ENCODE measurements at regions of chr1 and their contacts with region 1.

Region 1: GRCh38 chr1:156728597-156729462 is at the start of gene ISG20L2:
- DNase-seq: peak; percentile 90
- ATAC-seq: peak; percentile 88
- H3K4me3 ChIP-seq: peak within 1 kb of the TSS; percentile 89 to 100 (median 98)
- H3K27ac ChIP-seq: peak within 1 kb of the TSS; percentile 79
- H3K4me1 ChIP-seq: peaks cover 49% of the 10 kb centered on the region
- H3K27me3 ChIP-seq: no peaks in the 10 kb centered on the region; a peak in 1 of 5 replicates
- CTCF ChIP-seq: 0 out of 2 replicates have a peak, but pooled peaks have one; percentile 21
- EP300 ChIP-seq: no peak
- POLR2A ChIP-seq: peak; percentile 57 to 86; a peak in 3 of 4 replicates
- RAD21 ChIP-seq: peak; percentile 14; the same call in 1 of the 2 replicates
- total RNA-seq, gene ISG20L2: 17.8 and 19.8 TPM in 2 replicates

Region 2: GRCh38 chr1:156659994-156660751 is 68.7 kb before region 1 on chr1:
- CTCF ChIA-PET with region 1: interaction called, 8 read pairs
- POLR2A ChIA-PET with region 1: interaction called, 27 read pairs
- in situ Hi-C with region 1: no loop called
- intact Hi-C with region 1: loop called (anchors 10 kb)
- DNase-seq: peak; percentile 95
- ATAC-seq: peak; percentile 65
- H3K4me3 ChIP-seq: peak overlapping the region; percentile 75 to 82 (median 80)
- H3K27ac ChIP-seq: peak overlapping the region; percentile 95
- H3K4me1 ChIP-seq: peaks cover 80% of the 10 kb centered on the region
- H3K27me3 ChIP-seq: no peaks in the 10 kb centered on the region; a peak in 1 of 5 replicates
- CTCF ChIP-seq: peak; percentile 97
- EP300 ChIP-seq: peak in 1 of 2 experiments; percentile 48; a peak in 1 of 4 replicates
- POLR2A ChIP-seq: peak in 1 of 2 experiments; percentile 95; a peak in 2 of 4 replicates
- RAD21 ChIP-seq: peak; percentile 97

Region 3: GRCh38 chr1:156705918-156706656 is 22.7 kb before region 1 on chr1:
- CTCF ChIA-PET with region 1: interaction called, 6 read pairs
- POLR2A ChIA-PET with region 1: interaction called, 20 read pairs
- in situ Hi-C with region 1: no loop called
- intact Hi-C with region 1: no loop called
- DNase-seq: peak; percentile 23
- ATAC-seq: peak; percentile 53
- H3K4me3 ChIP-seq: peak overlapping the region; percentile 41 to 66 (median 52)
- H3K27ac ChIP-seq: no peak overlapping the region
- H3K4me1 ChIP-seq: peaks cover 25% of the 10 kb centered on the region
- H3K27me3 ChIP-seq: peaks cover 11 to 79% of the 10 kb centered on the region in 2 experiments
- CTCF ChIP-seq: peak; percentile 73
- EP300 ChIP-seq: no peak
- POLR2A ChIP-seq: no peak
- RAD21 ChIP-seq: peak; percentile 44

Region 4: DNA sequence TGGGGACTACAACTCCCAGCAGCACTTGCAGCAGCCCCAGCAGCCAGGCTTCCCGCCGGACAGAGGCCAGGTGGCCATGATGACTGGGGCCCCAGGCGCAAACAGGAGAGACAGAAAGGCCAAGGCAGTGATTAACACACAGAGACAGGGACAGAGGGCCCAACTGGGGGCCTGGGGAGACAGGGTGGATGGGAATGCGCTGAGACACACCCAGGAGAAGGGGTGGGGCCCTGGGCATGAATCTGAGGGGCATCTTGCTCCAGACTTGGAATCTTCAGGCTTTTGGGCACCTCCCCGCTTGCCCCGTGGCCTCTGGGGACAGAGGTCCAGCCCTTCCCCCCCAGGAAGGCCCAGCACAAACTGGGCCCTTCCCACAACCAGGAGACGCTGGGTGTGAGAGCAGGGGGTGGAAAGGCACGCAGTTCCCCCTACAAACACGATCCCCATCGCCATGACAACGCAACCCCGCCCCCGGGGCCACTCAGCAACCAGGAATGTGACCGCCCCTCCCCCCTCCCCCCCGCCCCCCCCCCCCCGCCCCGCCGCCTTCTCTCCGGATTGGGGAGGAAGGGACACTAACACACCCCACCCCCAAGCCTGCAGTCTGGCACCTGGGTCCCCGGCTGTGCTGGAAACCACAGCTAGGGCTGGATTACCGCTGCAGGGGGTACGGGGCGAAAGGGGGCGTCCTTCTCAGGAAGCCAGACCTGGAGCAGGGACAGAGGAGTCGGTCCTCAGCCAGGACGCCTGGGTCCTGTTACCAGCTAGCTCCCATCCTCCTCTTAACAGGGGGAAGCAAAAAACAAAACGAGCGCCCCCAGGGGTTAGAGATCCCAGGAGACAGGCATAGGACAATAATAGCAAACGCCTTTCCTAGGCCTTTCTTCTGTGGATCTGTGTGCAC is 18.1 kb after region 1 on chr1:
- CTCF ChIA-PET with region 1: no interaction called
- POLR2A ChIA-PET with region 1: interaction called, 99 read pairs
- in situ Hi-C with region 1: no loop called
- intact Hi-C with region 1: loop called (anchors 2 kb)
- DNase-seq: peak; percentile 90
- ATAC-seq: peak; percentile 72
- H3K4me3 ChIP-seq: peak overlapping the region; percentile 87 to 90 (median 88)
- H3K27ac ChIP-seq: peak overlapping the region; percentile 100
- H3K4me1 ChIP-seq: peaks cover 43% of the 10 kb centered on the region
- H3K27me3 ChIP-seq: no peaks in the 10 kb centered on the region; a peak in 1 of 5 replicates
- CTCF ChIP-seq: peak; percentile 51
- EP300 ChIP-seq: peak; percentile 20 to 48; a peak in 2 of 4 replicates
- POLR2A ChIP-seq: peak; percentile 61 to 88
- RAD21 ChIP-seq: peak; percentile 46

Region 5: GRCh38 chr1:156767101-156767878 is 38.5 kb after region 1 on chr1 and contains the start of gene PRCC:
- CTCF ChIA-PET with region 1: no interaction called
- POLR2A ChIA-PET with region 1: interaction called, 100 read pairs
- in situ Hi-C with region 1: loop called (anchors 5 kb)
- intact Hi-C with region 1: loop called (anchors 1 kb)
- DNase-seq: peak; percentile 99
- ATAC-seq: peak; percentile 96
- H3K4me3 ChIP-seq: peak within 1 kb of the TSS; percentile 85 to 100 (median 92)
- H3K27ac ChIP-seq: peak within 1 kb of the TSS; percentile 84
- H3K4me1 ChIP-seq: peaks cover 49% of the 10 kb centered on the region
- H3K27me3 ChIP-seq: no peaks in the 10 kb centered on the region; a peak in 1 of 5 replicates
- CTCF ChIP-seq: no peak
- EP300 ChIP-seq: no peak
- POLR2A ChIP-seq: peak; percentile 49 to 73
- RAD21 ChIP-seq: no peak
- total RNA-seq, gene PRCC: 24.2 and 26.8 TPM in 2 replicates

Measured in HepG2 (cell line).